ENCODE measurements at regions of chr6 and their contacts with region 1.

Region 1: DNA sequence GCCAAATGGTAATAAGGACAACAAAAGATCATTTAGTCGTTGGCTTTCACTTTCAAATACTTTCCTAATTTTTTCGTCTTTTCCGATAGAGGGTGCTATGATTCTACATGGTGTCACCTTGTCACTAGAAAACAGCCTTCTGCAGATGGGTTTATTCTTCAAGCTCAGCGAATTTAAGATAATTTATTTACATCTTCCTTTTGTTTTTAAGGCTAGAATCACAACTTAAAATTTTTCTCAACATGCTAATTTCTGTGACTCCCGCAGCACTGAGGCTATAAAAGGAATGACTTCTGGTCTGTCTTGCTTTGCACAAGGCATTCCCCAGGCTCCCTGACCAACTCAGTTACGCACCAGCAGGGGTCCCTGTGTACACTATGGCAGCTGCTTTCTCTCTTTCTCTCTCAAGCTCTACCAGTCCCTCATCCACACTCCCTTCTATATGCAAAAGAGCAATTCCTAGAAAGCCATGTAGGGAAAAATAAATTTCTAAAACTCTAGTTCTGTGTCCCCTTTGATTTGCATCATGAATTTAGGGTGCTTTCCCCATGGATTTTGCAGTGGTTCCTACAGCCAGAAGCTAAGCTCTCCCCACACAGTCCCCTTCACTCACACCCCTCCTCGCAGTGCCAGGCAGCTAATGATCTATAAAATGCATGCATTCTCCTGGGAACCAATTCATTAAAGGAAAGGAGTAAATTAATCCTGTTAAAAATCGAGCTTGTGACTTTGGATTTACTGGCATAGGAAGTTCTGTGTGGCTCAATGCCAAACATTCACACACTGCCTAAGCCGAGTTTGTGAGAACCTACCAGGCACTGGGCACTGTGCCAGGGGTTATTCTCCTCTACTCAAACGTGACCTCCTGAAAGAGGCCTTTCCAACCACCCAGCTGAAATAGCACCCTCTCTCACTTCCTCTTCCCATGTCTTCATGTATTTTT is 74.5 kb downstream of the DCDC2 start:
- DNase-seq: peak; percentile 6
- H3K4me3 ChIP-seq: no peak overlapping the region
- H3K27me3 ChIP-seq: no peaks in the 10 kb centered on the region
- CTCF ChIP-seq: peak; percentile 70

Region 2: GRCh38 chr6:24140591-24140990 is 142.7 kb before region 1 on chr6:
- CTCF ChIA-PET with region 1: no interaction called
- POLR2A ChIA-PET with region 1: no interaction called
- DNase-seq: no peak
- H3K4me3 ChIP-seq: no peak overlapping the region
- H3K27me3 ChIP-seq: no peaks in the 10 kb centered on the region
- CTCF ChIP-seq: no peak

Region 3: DNA sequence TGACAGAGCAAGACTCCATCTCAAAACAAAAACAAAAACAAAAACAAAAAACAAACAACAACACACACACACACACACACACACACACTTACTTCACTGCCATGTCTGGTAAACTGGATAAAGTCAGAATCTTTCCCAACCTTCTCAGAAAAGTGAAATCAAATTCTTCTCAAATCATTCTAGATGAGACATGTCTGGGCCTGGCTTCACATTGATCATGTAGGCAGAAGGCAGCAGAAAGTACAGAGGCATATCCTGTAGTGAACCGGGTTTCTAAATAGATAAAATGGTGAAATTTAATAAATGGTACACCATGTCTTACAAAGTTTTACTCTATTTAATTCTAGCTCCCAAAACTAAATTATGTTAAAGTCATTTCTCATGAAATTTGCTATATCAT is 104.5 kb after region 1 on chr6:
- CTCF ChIA-PET with region 1: interaction called, 18 read pairs
- POLR2A ChIA-PET with region 1: no interaction called
- DNase-seq: no peak
- H3K4me3 ChIP-seq: no peak overlapping the region
- H3K27me3 ChIP-seq: no peaks in the 10 kb centered on the region
- CTCF ChIP-seq: no peak

Measured in BJ (cell line).